ENCODE measurements at regions of chr10 and their contacts with region 1.

Region 1: GRCh38 chr10:15200626-15201025 is 32.1 kb upstream of the NMT2 start:
- DNase-seq: no peak
- H3K4me3 ChIP-seq: no peak overlapping the region
- H3K4me3 Mint-ChIP-seq: peak overlapping the region in 2 of 8 donors; percentile 10 to 20
- H3K27ac ChIP-seq: no peak overlapping the region
- H3K27ac Mint-ChIP-seq: peak overlapping the region in 3 of 7 donors; percentile 3 to 50 (median 32)
- H3K4me1 ChIP-seq: peaks cover 43% of the 10 kb centered on the region
- H3K4me1 Mint-ChIP-seq: peaks cover 9 to 81% (median 48%) of the 10 kb centered on the region in 4 donors
- H3K27me3 ChIP-seq: no peaks in the 10 kb centered on the region
- H3K27me3 Mint-ChIP-seq: peaks cover 0 to 1% of the 10 kb centered on the region in 2 donors

Region 2: DNA sequence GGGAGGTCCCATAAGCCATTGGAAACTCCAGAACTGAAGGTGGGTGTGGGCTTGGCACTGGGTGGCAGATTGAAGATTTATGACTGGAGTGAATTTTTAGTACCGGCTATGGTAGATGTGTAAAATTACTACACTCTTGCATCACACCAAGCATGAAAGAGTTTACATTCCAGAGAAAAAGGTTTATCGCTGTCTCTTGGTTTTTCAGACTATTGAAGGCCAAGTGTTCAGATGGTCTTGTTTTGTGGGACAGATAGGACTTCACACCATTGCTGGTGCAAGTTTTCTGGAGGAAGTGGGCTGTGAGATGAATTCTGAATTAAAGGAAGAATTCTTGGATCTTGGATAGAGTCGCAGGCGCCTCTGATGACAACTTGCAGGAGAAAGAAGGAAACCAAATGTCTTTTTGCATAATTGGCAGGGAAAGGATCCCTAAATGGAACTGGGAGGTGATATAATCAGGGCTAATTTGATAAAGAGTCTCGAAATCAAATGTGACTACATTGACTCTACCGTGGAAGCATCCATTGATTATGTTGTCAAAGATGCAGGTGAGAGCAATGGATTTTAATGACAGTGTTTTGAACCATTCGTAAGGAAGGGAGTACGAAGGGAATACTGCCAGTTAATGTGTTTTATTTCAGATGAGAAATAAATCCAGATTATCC is 18.0 kb before region 1 on chr10:
- CTCF ChIA-PET with region 1: interaction called, 5 read pairs
- POLR2A ChIA-PET with region 1: interaction called, 24 read pairs
- intact Hi-C with region 1: no loop called
- DNase-seq: no peak
- H3K4me3 ChIP-seq: no peak overlapping the region
- H3K4me3 Mint-ChIP-seq: no peak overlapping the region
- H3K27ac ChIP-seq: no peak overlapping the region
- H3K27ac Mint-ChIP-seq: peak overlapping the region in 4 of 7 donors; percentile 14 to 56 (median 20)
- H3K4me1 ChIP-seq: peaks cover 25% of the 10 kb centered on the region
- H3K4me1 Mint-ChIP-seq: peaks cover 12 to 33% (median 21%) of the 10 kb centered on the region in 4 donors
- H3K27me3 ChIP-seq: no peaks in the 10 kb centered on the region
- H3K27me3 Mint-ChIP-seq: no peaks in the 10 kb centered on the region

Region 3: GRCh38 chr10:15189133-15189885 is 11.3 kb before region 1 on chr10:
- CTCF ChIA-PET with region 1: interaction called, 5 read pairs
- POLR2A ChIA-PET with region 1: interaction called, 24 read pairs
- intact Hi-C with region 1: loop called (anchors 2 kb)
- DNase-seq: no peak
- H3K4me3 ChIP-seq: no peak overlapping the region
- H3K4me3 Mint-ChIP-seq: peak overlapping the region in 4 of 8 donors; percentile 6 to 64 (median 29)
- H3K27ac ChIP-seq: no peak overlapping the region
- H3K27ac Mint-ChIP-seq: peak overlapping the region in 5 of 7 donors; percentile 1 to 64 (median 22)
- H3K4me1 ChIP-seq: peaks cover 42% of the 10 kb centered on the region
- H3K4me1 Mint-ChIP-seq: peaks cover 18 to 52% (median 34%) of the 10 kb centered on the region in 4 donors
- H3K27me3 ChIP-seq: no peaks in the 10 kb centered on the region
- H3K27me3 Mint-ChIP-seq: no peaks in the 10 kb centered on the region

Region 4: DNA sequence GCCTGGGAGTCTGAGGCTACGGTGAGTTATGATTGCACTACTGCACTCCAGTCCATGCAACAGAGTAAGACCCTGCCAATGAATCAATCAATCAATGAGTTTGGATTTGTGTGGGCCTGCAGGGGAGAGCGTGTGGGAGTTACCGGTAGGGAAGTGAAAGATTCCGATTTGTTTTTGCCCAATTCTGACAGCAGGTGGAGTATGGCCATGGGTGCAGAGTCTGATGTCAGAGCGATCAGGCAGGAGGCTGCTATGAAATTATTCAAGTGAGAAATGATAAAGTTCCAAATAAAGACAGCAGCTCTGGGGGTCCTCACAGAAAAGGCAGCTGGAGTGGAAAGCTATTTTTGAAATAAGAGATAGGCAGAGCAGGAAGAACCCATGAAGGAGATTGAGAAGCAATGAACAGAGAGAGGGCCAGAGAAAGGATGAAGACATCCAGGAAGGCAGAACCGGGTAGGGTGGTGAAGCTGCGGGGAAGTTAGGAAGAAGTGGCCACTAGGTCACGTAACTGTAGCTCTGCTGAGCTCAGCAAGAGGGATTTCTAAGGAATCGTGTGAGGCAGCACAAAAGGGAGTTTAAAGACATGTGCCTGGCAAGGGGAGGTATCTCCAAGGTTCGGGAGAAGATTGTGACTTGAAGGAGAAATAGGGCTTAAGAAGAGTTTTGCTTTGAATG is 61.5 kb after region 1 on chr10:
- CTCF ChIA-PET with region 1: no interaction called
- POLR2A ChIA-PET with region 1: no interaction called
- intact Hi-C with region 1: no loop called
- DNase-seq: peak in 1 of 5 donors; percentile 11
- H3K4me3 ChIP-seq: no peak overlapping the region
- H3K4me3 Mint-ChIP-seq: no peak overlapping the region
- H3K27ac ChIP-seq: no peak overlapping the region
- H3K27ac Mint-ChIP-seq: no peak overlapping the region
- H3K4me1 ChIP-seq: no peaks in the 10 kb centered on the region
- H3K4me1 Mint-ChIP-seq: no peaks in the 10 kb centered on the region
- H3K27me3 ChIP-seq: no peaks in the 10 kb centered on the region
- H3K27me3 Mint-ChIP-seq: peaks cover 0 to 2% of the 10 kb centered on the region in 2 donors